Activated CD4-positive, alpha-beta T cell treated with anti-CD3 and anti-CD28 coated beads for 36 hours (primary cell): ENCODE measurements at regions of chr3 and their contacts with region 1.

Region 1: GRCh38 chr3:113745273-113746068 is 578 bp downstream of the NAA50 start:
- DNase-seq: peak; percentile 88
- ATAC-seq: peak; percentile 71
- H3K4me3 Mint-ChIP-seq: peak overlapping the region; percentile 93
- H3K27ac Mint-ChIP-seq: peak overlapping the region; percentile 100
- H3K4me1 Mint-ChIP-seq: peaks cover 66% of the 10 kb centered on the region
- H3K27me3 Mint-ChIP-seq: no peaks in the 10 kb centered on the region

Region 2: DNA sequence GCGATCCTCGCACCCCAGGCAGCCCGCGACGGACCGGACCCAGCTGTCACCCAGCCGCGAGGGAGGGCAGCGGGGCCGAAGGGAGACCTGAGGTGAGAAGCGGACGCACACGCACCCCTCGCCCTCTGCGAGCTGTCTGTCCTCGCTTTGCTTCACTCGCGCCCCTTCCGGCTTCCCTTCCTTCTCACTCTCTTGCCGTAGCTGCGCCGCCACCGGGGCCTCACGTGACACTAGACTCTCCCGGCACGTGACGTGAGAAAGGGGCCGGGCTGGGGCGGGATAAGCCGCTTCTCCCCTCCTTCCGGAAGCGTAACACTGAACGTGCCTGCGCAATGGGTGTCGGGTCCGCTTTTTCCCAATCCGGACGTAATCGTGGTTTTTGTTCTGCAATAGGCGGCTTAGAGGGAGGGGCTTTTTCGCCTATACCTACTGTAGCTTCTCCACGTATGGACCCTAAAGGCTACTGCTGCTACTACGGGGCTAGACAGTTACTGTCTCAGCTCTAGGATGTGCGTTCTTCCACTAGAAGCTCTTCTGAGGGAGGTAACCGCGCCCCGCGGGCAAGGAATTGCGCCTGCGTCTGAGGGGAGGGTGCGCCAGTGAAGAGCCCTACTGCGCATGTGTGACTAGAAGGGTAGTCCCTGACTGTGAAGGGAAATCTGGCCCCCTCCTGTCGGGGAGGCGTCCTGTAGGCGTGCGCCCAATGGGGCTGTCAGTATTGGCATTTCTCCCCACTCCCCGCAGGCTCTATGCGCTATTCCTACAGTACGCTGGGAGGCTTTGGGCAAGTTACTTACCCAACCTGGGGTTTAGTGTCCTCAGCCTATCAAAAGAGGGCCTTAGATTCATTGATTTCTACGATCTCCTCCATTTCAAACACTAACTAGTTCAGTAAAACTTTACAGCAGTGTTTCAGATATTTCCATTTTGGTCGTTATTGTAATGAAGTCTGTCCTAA is 1183.5 kb before region 1 on chr3 and contains the starts of genes ATG3 and SLC35A5:
- CTCF ChIA-PET with region 1: no interaction called
- POLR2A ChIA-PET with region 1: no interaction called
- intact Hi-C with region 1: loop called in 1 of 2 experiments (anchors 2 kb)
- DNase-seq: peak; percentile 99
- ATAC-seq: peak; percentile 81
- H3K4me3 Mint-ChIP-seq: peak within 1 kb of the TSS; percentile 97
- H3K27ac Mint-ChIP-seq: peak within 1 kb of the TSS; percentile 98
- H3K4me1 Mint-ChIP-seq: peaks cover 35% of the 10 kb centered on the region
- H3K27me3 Mint-ChIP-seq: no peaks in the 10 kb centered on the region
- total RNA-seq, gene ATG3: 54.9 to 71.0 TPM
- total RNA-seq, gene SLC35A5: 16.5 to 18.7 TPM

Region 3: GRCh38 chr3:113051302-113051711 is 694.2 kb before region 1 on chr3:
- CTCF ChIA-PET with region 1: no interaction called
- POLR2A ChIA-PET with region 1: no interaction called
- intact Hi-C with region 1: loop called in 1 of 2 experiments (anchors 1 kb)
- DNase-seq: peak; percentile 92
- ATAC-seq: peak; percentile 95
- H3K4me3 Mint-ChIP-seq: no peak overlapping the region
- H3K27ac Mint-ChIP-seq: no peak overlapping the region
- H3K4me1 Mint-ChIP-seq: peaks cover 2% of the 10 kb centered on the region
- H3K27me3 Mint-ChIP-seq: no peaks in the 10 kb centered on the region

Region 4: GRCh38 chr3:113531826-113532697 is 213.4 kb before region 1 on chr3 and contains the start of gene SIDT1:
- CTCF ChIA-PET with region 1: no interaction called
- POLR2A ChIA-PET with region 1: no interaction called
- intact Hi-C with region 1: loop called (anchors 1 to 5 kb)
- DNase-seq: peak; percentile 85
- ATAC-seq: peak; percentile 78
- H3K4me3 Mint-ChIP-seq: peak within 1 kb of the TSS; percentile 89
- H3K27ac Mint-ChIP-seq: peak within 1 kb of the TSS; percentile 96
- H3K4me1 Mint-ChIP-seq: peaks cover 49% of the 10 kb centered on the region
- H3K27me3 Mint-ChIP-seq: no peaks in the 10 kb centered on the region
- total RNA-seq, gene SIDT1: 19.0 to 19.7 TPM

Region 5: GRCh38 chr3:113838631-113839209 is 93.2 kb after region 1 on chr3 and contains the start of gene GRAMD1C:
- CTCF ChIA-PET with region 1: interaction called, 4 read pairs
- POLR2A ChIA-PET with region 1: no interaction called
- intact Hi-C with region 1: loop called in 1 of 2 experiments (anchors 2 kb)
- DNase-seq: peak; percentile 92
- ATAC-seq: peak; percentile 98
- H3K4me3 Mint-ChIP-seq: peak within 1 kb of the TSS; percentile 73
- H3K27ac Mint-ChIP-seq: no peak within 1 kb of the TSS
- H3K4me1 Mint-ChIP-seq: peaks cover 8% of the 10 kb centered on the region
- H3K27me3 Mint-ChIP-seq: peaks cover 3% of the 10 kb centered on the region
- total RNA-seq, gene GRAMD1C: 0.87 to 0.97 TPM

Region 6: GRCh38 chr3:114056130-114057010 is 310.9 kb after region 1 on chr3 and contains the starts of genes CCDC191 and QTRT2:
- CTCF ChIA-PET with region 1: no interaction called
- POLR2A ChIA-PET with region 1: no interaction called
- intact Hi-C with region 1: loop called (anchors 1 kb)
- DNase-seq: peak; percentile 99
- ATAC-seq: peak; percentile 97
- H3K4me3 Mint-ChIP-seq: peak within 1 kb of the TSS; percentile 91
- H3K27ac Mint-ChIP-seq: peak within 1 kb of the TSS; percentile 95
- H3K4me1 Mint-ChIP-seq: peaks cover 43% of the 10 kb centered on the region
- H3K27me3 Mint-ChIP-seq: no peaks in the 10 kb centered on the region
- total RNA-seq, gene CCDC191: 2.2 to 2.4 TPM
- total RNA-seq, gene QTRT2: 31.3 to 47.0 TPM

Region 7: DNA sequence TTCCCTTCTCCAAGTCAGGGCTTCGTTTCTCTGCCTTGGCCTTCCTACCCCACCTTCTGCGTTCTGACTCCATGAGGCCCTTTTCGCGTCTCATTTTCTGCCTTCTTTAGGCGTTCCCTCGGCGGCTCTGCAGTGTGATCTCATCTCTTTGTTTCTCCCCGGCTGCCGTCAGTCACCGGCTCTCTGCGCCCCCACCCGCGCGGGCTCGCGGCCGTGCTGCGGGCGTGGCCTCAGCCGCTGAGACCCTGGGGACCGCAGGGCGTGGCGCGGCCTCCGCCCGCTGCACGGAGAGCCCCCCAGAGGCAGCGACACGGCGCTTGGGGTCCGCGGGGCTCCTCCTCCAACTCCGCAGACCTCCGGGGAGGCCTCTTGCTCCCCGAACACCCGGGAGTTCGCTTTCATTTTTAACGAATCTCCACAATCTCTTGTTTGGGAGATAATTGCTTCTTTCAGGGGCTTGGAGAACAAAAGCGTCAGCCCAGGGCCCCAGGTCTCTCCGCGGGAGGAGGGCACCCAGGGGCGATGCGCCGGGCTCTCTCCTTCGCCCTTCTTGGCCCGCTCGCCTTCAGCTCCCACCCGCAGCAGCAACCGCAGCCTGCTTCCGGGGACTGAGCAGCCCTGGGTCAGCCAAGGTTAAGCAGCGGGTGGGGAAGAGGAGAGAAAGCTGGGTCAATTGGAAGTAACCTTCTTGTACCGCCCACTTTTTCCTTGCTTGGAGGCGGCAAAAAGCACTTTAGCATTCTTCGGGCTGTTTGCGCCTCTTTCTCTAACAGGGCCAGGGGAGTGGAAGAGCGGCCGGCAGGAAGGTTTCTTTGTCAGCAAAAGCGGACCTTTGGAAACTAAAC is 1913.1 kb after region 1 on chr3:
- CTCF ChIA-PET with region 1: no interaction called
- POLR2A ChIA-PET with region 1: no interaction called
- intact Hi-C with region 1: loop called in 1 of 2 experiments (anchors 10 kb)
- DNase-seq: peak; percentile 88
- ATAC-seq: peak; percentile 90
- H3K4me3 Mint-ChIP-seq: peak overlapping the region; percentile 66
- H3K27ac Mint-ChIP-seq: peak overlapping the region; percentile 95
- H3K4me1 Mint-ChIP-seq: peaks cover 51% of the 10 kb centered on the region
- H3K27me3 Mint-ChIP-seq: peaks cover 2% of the 10 kb centered on the region